WTC11 (cell line): ENCODE measurements at regions of chr5 and their contacts with region 1.

Region 1: DNA sequence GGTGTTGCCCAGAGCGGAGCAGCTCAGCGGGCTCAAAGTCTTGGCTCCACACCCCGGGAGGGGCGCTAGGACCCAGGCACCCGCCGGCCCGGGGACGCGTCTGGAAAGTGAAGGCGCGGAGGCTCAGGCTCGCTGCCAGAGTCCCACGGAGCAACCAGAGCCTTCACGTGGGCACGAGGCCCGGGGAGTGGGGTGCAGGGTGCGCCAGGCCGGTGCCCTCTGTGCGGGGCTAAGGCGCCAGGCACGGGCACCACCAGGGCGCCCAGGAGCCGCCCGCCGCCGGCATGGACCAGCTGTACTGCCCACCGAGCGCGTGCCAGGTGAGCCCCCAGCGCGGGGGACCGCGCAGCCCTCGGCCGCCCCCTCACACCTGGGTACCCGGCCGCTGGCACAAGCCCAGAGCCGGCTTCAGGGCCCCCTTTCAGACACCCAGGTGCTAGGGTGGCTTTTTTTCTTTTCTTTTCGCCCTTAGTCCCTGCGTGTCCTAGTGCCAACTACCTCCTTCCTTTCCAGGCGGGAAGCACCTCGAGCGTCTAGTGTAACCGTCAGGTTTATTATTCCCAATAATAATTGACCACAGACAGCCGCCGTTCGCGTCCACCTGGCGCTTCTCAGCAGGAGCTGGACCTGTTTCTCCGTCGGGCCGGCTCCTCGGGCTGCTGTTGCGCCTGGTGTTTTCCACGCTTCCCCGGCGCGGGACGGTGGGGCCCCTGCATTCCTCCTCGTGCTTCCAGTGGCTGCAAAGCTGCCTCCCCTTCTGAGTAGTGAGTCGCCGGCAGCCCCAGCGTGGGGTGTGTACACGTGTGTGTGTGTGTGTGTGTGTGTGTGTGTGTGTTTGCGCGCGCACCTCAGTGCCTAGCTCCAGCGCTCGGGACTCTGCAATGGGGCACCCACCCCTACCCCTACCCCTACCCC is 30.1 kb upstream of the PDE8B start:
- DNase-seq: peak; percentile 45
- ATAC-seq: peak; percentile 66
- H3K4me3 Mint-ChIP-seq: peak overlapping the region; percentile 66
- H3K27ac Mint-ChIP-seq: no peak overlapping the region
- H3K4me1 Mint-ChIP-seq: peaks cover 9% of the 10 kb centered on the region
- H3K27me3 Mint-ChIP-seq: peaks cover 45% of the 10 kb centered on the region
- CTCF ChIP-seq: no peak

Region 2: DNA sequence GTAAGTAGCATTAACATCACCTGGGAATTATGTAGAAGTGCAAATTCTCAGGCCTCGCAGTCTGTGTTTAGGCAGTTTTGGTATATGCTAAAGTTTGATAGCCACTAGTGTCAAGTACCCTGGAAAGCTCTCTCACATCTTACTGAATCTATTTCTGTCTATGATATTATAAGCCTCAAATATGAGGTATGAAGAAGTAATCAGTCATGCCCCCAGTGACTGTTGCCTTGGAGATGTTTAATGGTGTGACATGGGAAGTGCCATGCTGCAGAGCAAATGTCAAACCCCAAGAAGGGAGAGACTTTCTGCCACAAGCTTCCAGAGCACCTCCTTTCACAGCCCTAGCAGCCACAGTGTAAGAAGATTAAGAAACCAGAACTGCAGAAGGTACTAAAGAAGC is 20.2 kb after region 1 on chr5:
- CTCF ChIA-PET with region 1: no interaction called
- POLR2A ChIA-PET with region 1: no interaction called
- DNase-seq: no peak
- ATAC-seq: no peak
- H3K4me3 Mint-ChIP-seq: no peak overlapping the region
- H3K27ac Mint-ChIP-seq: no peak overlapping the region
- H3K4me1 Mint-ChIP-seq: no peaks in the 10 kb centered on the region
- H3K27me3 Mint-ChIP-seq: peaks cover 9% of the 10 kb centered on the region; the same call in 1 of the 2 replicates
- CTCF ChIP-seq: no peak

Region 3: GRCh38 chr5:77491783-77492652 is 311.6 kb after region 1 on chr5 and contains the start of gene WDR41:
- CTCF ChIA-PET with region 1: interaction called, 13 read pairs
- POLR2A ChIA-PET with region 1: no interaction called
- DNase-seq: peak; percentile 86
- ATAC-seq: peak; percentile 92
- H3K4me3 Mint-ChIP-seq: peak within 1 kb of the TSS; percentile 89
- H3K27ac Mint-ChIP-seq: peak within 1 kb of the TSS; percentile 57; the same call in 1 of the 2 replicates
- H3K4me1 Mint-ChIP-seq: peaks cover 13% of the 10 kb centered on the region
- H3K27me3 Mint-ChIP-seq: peaks cover 35% of the 10 kb centered on the region
- CTCF ChIP-seq: peak; percentile 78
- total RNA-seq, gene WDR41: 39.8 to 44.2 TPM (median 42.3 TPM) in 3 replicates